Activated naive CD4-positive, alpha-beta T cell treated with anti-CD3 and anti-CD28 coated beads, Interleukin-2, amount 10 ng/mL, durations not matched to agents 7 days and 5 days (primary cell): ENCODE measurements at regions of chr22 and their contacts with region 1.

Region 1: GRCh38 chr22:22215659-22216449 is 28.7 kb upstream of the VPREB1 start:
- DNase-seq: no peak
- H3K4me3 Mint-ChIP-seq: no peak overlapping the region
- H3K27ac Mint-ChIP-seq: no peak overlapping the region
- H3K4me1 Mint-ChIP-seq: peaks cover 11% of the 10 kb centered on the region
- H3K27me3 Mint-ChIP-seq: peaks cover 4% of the 10 kb centered on the region

Region 2: DNA sequence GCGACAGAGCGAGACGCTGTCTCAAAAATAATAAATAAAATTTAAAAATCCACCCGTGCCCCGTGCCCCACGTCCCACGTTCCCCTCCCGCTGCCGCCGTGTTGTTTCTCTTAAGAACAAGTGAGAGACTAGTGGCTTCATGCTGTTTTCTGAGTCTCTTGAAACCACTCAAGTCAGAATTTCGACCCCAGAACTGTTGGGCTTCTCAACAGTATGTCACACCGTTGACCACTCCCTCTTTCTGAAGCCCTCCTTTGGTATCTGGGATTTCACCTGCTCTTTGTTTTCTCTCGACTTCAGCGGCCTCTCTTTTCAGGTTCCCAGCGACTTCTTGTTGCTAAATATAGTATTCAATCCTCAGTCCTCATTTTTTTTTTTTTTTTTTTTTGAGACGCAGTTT is 549.1 kb before region 1 on chr22:
- CTCF ChIA-PET with region 1: no interaction called
- DNase-seq: no peak
- H3K4me3 Mint-ChIP-seq: peak overlapping the region; percentile 100
- H3K27ac Mint-ChIP-seq: peak overlapping the region; percentile 98
- H3K4me1 Mint-ChIP-seq: peaks cover 36% of the 10 kb centered on the region
- H3K27me3 Mint-ChIP-seq: peaks cover 2% of the 10 kb centered on the region

Region 3: DNA sequence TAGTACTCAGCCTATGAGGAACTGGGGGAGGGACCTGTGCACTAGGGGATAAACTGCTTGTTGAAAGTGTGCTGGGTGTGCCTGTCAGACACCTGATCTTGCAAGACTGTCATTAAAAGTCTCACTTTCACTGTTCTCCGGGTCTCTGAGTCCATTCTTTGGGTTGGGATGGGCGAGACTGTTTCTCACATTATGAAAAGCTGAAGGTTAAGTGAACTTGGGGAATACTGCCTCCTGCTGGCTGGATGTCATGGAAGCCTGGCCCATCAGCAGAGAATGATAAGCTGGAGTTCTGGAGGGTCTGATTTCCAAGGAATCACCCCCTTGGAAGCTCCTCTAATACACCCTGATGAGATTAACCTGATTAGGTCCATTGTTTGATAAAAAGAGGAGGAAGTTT is 19.7 kb after region 1 on chr22:
- CTCF ChIA-PET with region 1: interaction called, 262 read pairs
- DNase-seq: peak; percentile 74
- H3K4me3 Mint-ChIP-seq: no peak overlapping the region
- H3K27ac Mint-ChIP-seq: no peak overlapping the region
- H3K4me1 Mint-ChIP-seq: peaks cover 15% of the 10 kb centered on the region
- H3K27me3 Mint-ChIP-seq: no peaks in the 10 kb centered on the region